MCF 10A (cell line): ENCODE measurements at regions of chr1 and their contacts with region 1.

Region 1: GRCh38 chr1:170074250-170075157 is at the start of gene KIFAP3:
- DNase-seq: peak; percentile 100
- H3K4me3 Mint-ChIP-seq: peak within 1 kb of the TSS; percentile 84
- H3K27ac Mint-ChIP-seq: peak within 1 kb of the TSS; percentile 83
- H3K4me1 Mint-ChIP-seq: peaks cover 27% of the 10 kb centered on the region
- H3K27me3 Mint-ChIP-seq: no peaks in the 10 kb centered on the region
- CTCF ChIP-seq: peak; percentile 52
- total RNA-seq, gene KIFAP3: 29.2 and 41.1 TPM in 2 replicates

Region 2: DNA sequence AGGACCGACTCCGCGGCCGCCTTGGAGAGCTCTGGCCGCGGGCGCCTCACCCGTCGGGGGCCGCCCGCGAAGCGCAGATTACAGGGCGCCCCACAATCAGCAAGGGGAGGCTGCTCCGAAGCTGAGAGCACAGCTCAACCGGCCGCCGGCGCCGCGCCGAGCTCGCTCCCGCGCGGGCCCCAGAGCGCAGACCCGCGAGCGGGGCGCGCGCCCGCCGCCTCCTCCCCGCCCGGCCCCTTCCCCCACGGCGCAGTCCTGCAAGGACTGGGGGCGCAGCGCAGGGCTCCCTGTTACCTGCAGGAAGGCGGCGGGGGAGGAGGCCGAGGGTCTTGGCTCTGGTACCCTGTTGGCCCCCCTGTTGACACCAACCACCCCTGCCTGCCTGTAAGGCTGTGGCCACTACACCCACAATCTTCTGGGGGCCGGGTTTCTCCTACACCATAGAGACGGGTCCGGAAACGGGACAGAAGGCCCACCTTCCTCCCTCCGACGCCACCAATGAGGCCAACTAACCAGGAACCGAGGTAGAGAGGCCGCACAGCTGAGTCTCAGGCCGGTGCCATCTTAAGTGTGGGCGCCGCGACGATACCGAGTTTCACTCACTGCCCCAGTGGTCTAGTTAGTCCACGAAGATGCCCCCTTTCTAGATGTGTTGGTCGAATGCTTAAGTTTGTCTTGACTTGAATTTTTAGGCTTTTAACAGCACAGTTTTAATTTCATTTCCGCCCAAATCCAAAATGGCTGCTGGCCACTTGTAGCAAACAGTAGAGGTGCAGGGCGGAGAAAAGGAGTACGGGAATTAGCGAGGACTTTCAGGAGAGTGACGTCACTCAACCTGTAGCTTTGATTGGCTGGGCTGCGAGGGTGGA is 180.8 kb before region 1 on chr1 and contains the start of gene SCYL3:
- CTCF ChIA-PET with region 1: no interaction called
- POLR2A ChIA-PET with region 1: interaction called, 47 read pairs
- intact Hi-C with region 1: loop called (anchors 1 kb)
- DNase-seq: peak; percentile 99
- H3K4me3 Mint-ChIP-seq: peak within 1 kb of the TSS; percentile 83
- H3K27ac Mint-ChIP-seq: peak within 1 kb of the TSS; percentile 100
- H3K4me1 Mint-ChIP-seq: peaks cover 32% of the 10 kb centered on the region
- H3K27me3 Mint-ChIP-seq: no peaks in the 10 kb centered on the region
- CTCF ChIP-seq: no peak
- total RNA-seq, gene SCYL3: 7.4 and 9.3 TPM in 2 replicates

Region 3: DNA sequence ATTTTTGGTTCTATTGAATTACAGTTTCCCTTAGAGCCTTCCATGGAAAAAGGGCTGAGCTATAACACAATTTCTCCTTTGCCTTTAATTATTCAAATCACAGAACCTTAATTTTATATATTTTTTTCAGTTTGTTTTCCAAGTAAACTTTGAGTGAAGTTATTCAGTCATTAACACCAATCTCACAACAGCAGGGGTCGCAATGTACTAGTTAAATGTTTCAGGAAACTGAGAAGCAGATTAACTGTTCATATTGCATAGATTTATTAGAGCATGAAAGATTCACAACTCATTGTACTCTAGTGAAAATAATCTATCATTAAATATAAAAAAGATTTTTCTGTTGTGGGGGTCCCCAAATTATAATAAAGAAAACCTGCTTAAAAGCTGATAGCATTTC is 64.1 kb before region 1 on chr1:
- CTCF ChIA-PET with region 1: interaction called, 4 read pairs
- POLR2A ChIA-PET with region 1: no interaction called
- intact Hi-C with region 1: loop called (anchors 1 kb)
- DNase-seq: peak; percentile 74
- H3K4me3 Mint-ChIP-seq: no peak overlapping the region
- H3K27ac Mint-ChIP-seq: no peak overlapping the region
- H3K4me1 Mint-ChIP-seq: no peaks in the 10 kb centered on the region
- H3K27me3 Mint-ChIP-seq: no peaks in the 10 kb centered on the region
- CTCF ChIP-seq: peak; percentile 54

Region 4: GRCh38 chr1:170063109-170063826 is 11.2 kb before region 1 on chr1:
- CTCF ChIA-PET with region 1: interaction called, 8 read pairs
- POLR2A ChIA-PET with region 1: interaction called, 25 read pairs
- intact Hi-C with region 1: no loop called
- DNase-seq: peak; percentile 65
- H3K4me3 Mint-ChIP-seq: peak overlapping the region; percentile 28
- H3K27ac Mint-ChIP-seq: peak overlapping the region; percentile 72
- H3K4me1 Mint-ChIP-seq: peaks cover 14% of the 10 kb centered on the region
- H3K27me3 Mint-ChIP-seq: no peaks in the 10 kb centered on the region
- CTCF ChIP-seq: no peak

Region 5: GRCh38 chr1:170531758-170532657 is 457.5 kb after region 1 on chr1 and contains the start of gene GORAB:
- CTCF ChIA-PET with region 1: no interaction called
- POLR2A ChIA-PET with region 1: interaction called, 6 read pairs
- intact Hi-C with region 1: loop called (anchors 5 kb)
- DNase-seq: peak; percentile 97
- H3K4me3 Mint-ChIP-seq: no peak within 1 kb of the TSS
- H3K27ac Mint-ChIP-seq: no peak within 1 kb of the TSS
- H3K4me1 Mint-ChIP-seq: peaks cover 9% of the 10 kb centered on the region
- H3K27me3 Mint-ChIP-seq: no peaks in the 10 kb centered on the region
- CTCF ChIP-seq: no peak
- total RNA-seq, gene GORAB: 14.0 and 15.1 TPM in 2 replicates